ENCODE measurements at regions of chr7 and their contacts with region 1.

Region 1: DNA sequence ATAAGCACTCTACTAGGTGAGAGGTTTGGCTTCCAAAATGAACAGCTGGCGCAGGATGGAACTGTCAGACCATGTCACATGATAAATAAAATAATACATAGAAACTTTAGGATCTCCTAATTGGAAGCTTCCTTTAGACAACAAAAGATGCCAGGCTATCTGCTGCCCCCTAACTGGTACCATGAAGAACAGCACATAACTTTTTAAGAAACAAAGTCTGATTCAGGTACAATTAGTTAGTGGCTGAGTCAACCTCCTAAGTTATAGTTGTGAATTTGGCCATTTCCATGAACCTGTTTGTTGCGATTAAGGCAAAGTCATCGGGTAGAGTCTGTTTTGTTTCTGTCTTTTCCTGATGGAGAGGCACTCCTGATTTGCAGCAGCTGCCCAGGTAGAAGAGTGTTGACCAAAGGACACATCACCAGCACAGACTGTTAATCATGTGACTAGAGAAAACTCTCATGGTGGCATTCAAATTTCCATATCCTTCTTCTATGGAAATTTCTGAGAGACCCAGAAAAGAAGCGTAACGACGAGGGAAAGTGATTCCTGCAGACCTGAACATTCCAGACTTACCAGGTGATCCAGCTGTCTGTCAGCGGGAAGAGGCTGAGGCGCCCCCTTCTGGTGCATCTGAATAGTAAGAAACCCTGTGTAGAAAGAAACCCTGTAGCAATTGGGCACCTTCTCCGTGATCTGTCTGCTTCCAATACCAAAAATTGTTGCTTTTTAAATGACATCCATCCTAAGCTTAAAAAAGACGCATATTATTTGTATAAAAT is 8.6 kb upstream of the INHBA start:
- DNase-seq: peak; percentile 52 to 69
- H3K4me3 ChIP-seq: no peak overlapping the region
- H3K27ac ChIP-seq: no peak overlapping the region
- H3K4me1 ChIP-seq: no peaks in the 10 kb centered on the region
- H3K27me3 ChIP-seq: no peaks in the 10 kb centered on the region
- CTCF ChIP-seq: peak in 5 of 6 experiments; percentile 10 to 55 (median 42)
- POLR2A ChIP-seq: no peak

Region 2: GRCh38 chr7:40329601-40330153 is 1381.8 kb before region 1 on chr7:
- intact Hi-C with region 1: loop called (anchors 10 kb)
- DNase-seq: no peak
- H3K4me3 ChIP-seq: no peak overlapping the region
- H3K27ac ChIP-seq: no peak overlapping the region
- H3K4me1 ChIP-seq: peaks cover 0 to 4% of the 10 kb centered on the region in 2 donors
- H3K27me3 ChIP-seq: no peaks in the 10 kb centered on the region
- CTCF ChIP-seq: peak; percentile 40 to 84 (median 68)
- POLR2A ChIP-seq: no peak

Region 3: DNA sequence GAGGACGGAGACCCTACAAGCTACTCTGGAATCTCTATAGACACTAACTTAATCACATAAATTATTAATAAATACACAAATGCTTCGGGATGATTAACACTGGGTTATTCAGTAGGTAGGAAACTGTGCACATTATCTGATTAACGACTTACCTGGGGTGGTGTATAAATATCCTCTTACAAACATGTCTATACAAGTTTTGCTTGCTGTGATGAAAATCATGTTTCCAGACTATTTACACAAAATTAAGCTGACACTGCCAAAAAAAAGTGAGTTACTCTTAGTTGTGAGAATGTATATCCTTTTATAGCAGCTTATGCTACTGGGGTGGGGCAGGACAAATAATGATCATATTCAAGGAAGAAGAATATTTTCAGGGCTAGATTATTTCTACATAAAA is 885.8 kb after region 1 on chr7:
- intact Hi-C with region 1: no loop called
- DNase-seq: no peak
- H3K4me3 ChIP-seq: no peak overlapping the region
- H3K27ac ChIP-seq: no peak overlapping the region
- H3K4me1 ChIP-seq: no peaks in the 10 kb centered on the region
- H3K27me3 ChIP-seq: no peaks in the 10 kb centered on the region
- CTCF ChIP-seq: no peak
- POLR2A ChIP-seq: no peak